CD8-positive, alpha-beta T cell (primary cell): ENCODE measurements at regions of chr17 and their contacts with region 1.

Region 1: GRCh38 chr17:40355123-40355803 is 9.3 kb downstream of the GJD3 start:
- DNase-seq: peak; percentile 67 to 90 (median 80)
- ATAC-seq: peak; percentile 78
- H3K4me3 ChIP-seq: no peak overlapping the region
- H3K4me3 Mint-ChIP-seq: no peak overlapping the region
- H3K27ac ChIP-seq: no peak overlapping the region
- H3K27ac Mint-ChIP-seq: no peak overlapping the region
- H3K4me1 ChIP-seq: no peaks in the 10 kb centered on the region
- H3K4me1 Mint-ChIP-seq: peaks cover 13% of the 10 kb centered on the region
- H3K27me3 ChIP-seq: no peaks in the 10 kb centered on the region
- H3K27me3 Mint-ChIP-seq: no peaks in the 10 kb centered on the region
- CTCF ChIP-seq: peak; percentile 93

Region 2: DNA sequence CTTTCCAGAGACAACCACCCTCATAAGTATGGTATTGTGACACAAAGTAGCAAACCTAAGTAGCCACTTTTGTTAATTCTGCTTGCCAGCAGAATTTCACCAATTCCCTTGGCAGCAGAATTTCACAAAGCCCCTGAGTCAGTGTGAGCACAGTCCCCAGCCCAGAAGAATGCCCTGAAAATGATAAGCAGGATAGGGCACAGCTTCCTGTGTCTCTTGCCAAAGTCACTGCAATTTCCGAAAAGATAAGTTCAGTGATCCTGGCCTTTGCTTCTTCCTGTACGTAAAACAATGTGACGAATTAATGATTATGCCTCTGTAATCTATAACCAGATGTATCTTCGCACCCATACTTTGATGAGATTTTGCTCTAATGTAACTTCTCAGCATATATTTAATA is 152.1 kb before region 1 on chr17:
- CTCF ChIA-PET with region 1: interaction called, 5 read pairs
- POLR2A ChIA-PET with region 1: no interaction called
- intact Hi-C with region 1: loop called (anchors 1 to 2 kb)
- DNase-seq: no peak
- ATAC-seq: no peak
- H3K4me3 ChIP-seq: no peak overlapping the region
- H3K4me3 Mint-ChIP-seq: no peak overlapping the region
- H3K27ac ChIP-seq: no peak overlapping the region
- H3K27ac Mint-ChIP-seq: no peak overlapping the region
- H3K4me1 ChIP-seq: no peaks in the 10 kb centered on the region
- H3K4me1 Mint-ChIP-seq: peaks cover 8% of the 10 kb centered on the region
- H3K27me3 ChIP-seq: peaks cover 0 to 4% of the 10 kb centered on the region in 2 experiments
- H3K27me3 Mint-ChIP-seq: peaks cover 6% of the 10 kb centered on the region
- CTCF ChIP-seq: no peak

Region 3: DNA sequence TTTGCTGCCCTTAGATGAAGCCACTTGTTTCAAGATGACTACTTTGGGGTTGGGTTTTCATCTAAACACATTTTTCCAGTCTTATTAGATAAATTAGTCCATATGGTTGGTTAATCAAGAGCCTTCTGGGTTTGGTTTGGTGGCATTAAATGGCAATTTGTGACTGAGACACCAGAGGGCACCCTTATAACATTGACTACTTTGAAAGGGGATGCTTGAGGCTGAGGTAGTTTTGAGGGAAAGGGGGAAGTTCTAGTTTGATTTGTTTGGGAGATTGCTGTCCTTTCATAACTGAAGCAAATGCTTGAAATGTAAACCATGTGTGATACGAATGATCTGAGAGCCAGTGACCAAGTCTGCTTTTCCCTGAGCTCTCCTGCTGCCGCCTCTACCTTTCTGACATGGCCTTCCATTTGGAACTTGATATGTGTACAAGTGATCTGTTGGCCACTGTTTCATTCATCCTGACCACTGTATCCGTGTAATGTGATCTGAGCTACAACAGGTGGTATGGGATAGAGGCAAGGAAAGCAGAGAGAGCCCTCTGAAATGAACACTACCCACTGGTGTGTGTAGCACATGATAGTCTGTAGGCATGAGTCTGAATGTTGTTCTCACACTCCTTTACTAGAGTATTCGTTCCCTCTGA is 52.1 kb before region 1 on chr17:
- CTCF ChIA-PET with region 1: interaction called, 1,103 read pairs
- POLR2A ChIA-PET with region 1: interaction called, 10 read pairs
- intact Hi-C with region 1: loop called (anchors 1 kb)
- DNase-seq: peak in 5 of 9 experiments; percentile 41 to 83 (median 66)
- ATAC-seq: peak; percentile 69
- H3K4me3 ChIP-seq: no peak overlapping the region
- H3K4me3 Mint-ChIP-seq: no peak overlapping the region
- H3K27ac ChIP-seq: no peak overlapping the region
- H3K27ac Mint-ChIP-seq: no peak overlapping the region
- H3K4me1 ChIP-seq: peaks cover 35% of the 10 kb centered on the region
- H3K4me1 Mint-ChIP-seq: peaks cover 12% of the 10 kb centered on the region
- H3K27me3 ChIP-seq: no peaks in the 10 kb centered on the region
- H3K27me3 Mint-ChIP-seq: no peaks in the 10 kb centered on the region
- CTCF ChIP-seq: peak; percentile 85

Region 4: GRCh38 chr17:40326014-40326831 is 29.0 kb before region 1 on chr17:
- CTCF ChIA-PET with region 1: interaction called, 1,103 read pairs
- POLR2A ChIA-PET with region 1: interaction called, 9 read pairs
- intact Hi-C with region 1: loop called in 1 of 2 experiments (anchors 5 kb)
- DNase-seq: peak in 7 of 9 experiments; percentile 39 to 92 (median 71)
- ATAC-seq: peak; percentile 9
- H3K4me3 ChIP-seq: peak overlapping the region; percentile 36 to 51
- H3K4me3 Mint-ChIP-seq: peak overlapping the region; percentile 80
- H3K27ac ChIP-seq: peak overlapping the region; percentile 80 to 97
- H3K27ac Mint-ChIP-seq: peak overlapping the region; percentile 99
- H3K4me1 ChIP-seq: peaks cover 92% of the 10 kb centered on the region
- H3K4me1 Mint-ChIP-seq: peaks cover 90% of the 10 kb centered on the region
- H3K27me3 ChIP-seq: no peaks in the 10 kb centered on the region
- H3K27me3 Mint-ChIP-seq: no peaks in the 10 kb centered on the region
- CTCF ChIP-seq: no peak

Region 5: DNA sequence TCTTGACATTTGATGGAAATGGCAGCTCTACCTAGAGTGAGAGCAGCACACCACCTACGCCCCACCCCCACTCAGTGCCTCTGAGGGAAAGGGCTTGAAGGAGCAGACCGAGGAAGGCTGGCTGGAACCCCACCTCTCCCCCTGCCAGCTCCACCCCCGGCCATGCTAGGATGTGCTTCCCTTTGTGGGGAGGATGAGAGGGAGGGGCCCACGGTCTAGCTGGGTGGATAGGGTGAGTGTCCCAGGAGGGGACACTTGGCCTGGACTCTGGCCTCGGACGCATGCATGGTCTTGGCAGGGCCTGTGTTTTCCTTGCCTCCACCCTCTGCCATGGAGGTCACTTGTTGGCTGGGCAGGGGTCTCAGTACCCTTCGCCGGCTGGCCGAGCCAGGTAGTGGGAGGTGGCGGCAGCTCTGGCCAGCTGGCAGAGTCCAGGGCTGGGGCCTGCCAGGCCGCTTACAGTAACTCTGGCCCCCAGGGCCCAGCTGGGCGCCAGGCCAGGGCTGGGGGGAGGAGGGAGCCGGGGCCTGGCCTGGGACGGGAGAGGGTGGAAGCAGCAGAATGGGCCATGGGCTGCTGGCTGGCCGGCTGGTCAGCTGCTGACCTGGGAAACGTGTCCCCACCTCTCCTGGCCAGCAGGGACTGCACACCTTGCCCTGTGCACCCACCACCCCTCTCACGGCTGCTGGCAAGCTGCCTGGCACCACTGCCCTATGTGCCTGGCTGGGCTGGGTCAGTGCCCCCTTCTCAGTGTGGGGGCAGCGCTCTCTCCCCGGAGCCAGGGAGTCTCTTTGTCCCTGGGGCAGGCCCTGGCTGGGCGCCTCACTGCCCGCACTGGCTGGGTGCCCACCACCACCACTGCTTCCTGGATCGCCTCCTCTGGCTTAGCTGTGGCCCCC is 23.3 kb before region 1 on chr17:
- CTCF ChIA-PET with region 1: interaction called, 25 read pairs
- POLR2A ChIA-PET with region 1: no interaction called
- intact Hi-C with region 1: no loop called
- DNase-seq: peak in 1 of 9 experiments; percentile 20
- ATAC-seq: no peak
- H3K4me3 ChIP-seq: no peak overlapping the region
- H3K4me3 Mint-ChIP-seq: peak overlapping the region; percentile 15
- H3K27ac ChIP-seq: no peak overlapping the region
- H3K27ac Mint-ChIP-seq: peak overlapping the region; percentile 67
- H3K4me1 ChIP-seq: peaks cover 82% of the 10 kb centered on the region
- H3K4me1 Mint-ChIP-seq: peaks cover 75% of the 10 kb centered on the region
- H3K27me3 ChIP-seq: no peaks in the 10 kb centered on the region
- H3K27me3 Mint-ChIP-seq: no peaks in the 10 kb centered on the region
- CTCF ChIP-seq: no peak

Region 6: DNA sequence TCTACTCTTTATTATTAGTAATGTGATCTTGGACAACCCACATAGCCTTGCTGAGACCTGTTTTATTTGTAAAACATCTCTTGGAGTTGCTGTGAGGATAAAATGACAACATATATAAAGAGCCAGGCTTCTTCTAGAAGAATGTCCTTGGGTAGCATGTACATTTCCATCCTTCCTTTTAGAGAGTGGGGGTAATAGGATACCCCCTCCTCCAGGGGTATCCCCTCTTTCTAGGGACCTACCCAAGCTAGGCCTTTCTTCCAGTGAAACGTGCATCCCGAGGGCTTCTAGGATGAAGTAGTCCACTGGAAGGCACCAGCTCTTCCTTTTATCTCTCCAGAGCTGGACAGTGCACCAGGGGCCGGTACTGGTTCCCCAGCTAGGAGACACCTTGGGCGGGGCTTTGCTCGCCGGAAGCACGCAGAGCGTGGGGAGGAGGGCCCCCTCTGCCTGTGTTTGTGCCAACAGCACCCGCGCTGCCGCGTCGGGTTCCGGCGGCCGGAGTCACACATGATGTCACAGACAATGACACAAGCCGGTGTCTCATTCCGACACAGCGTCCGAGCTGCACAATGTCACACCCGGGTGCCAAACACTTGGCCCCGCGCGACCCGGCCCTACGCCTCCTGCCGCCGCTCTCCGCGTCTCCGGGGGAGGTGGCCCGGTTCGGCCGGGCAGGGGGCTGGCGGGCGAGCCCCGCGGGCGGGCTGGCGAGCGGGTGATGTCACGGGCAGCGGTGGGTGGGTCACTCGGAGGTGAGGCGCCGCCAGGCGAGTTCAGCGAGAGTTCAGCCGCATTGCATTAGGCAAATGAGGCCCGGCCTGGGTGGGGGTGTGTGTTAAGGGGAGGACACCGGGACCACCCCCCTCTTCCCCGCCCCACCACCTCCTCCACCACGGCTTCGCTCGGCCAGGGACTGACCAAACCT is 14.1 kb before region 1 on chr17:
- CTCF ChIA-PET with region 1: interaction called, 34 read pairs
- POLR2A ChIA-PET with region 1: no interaction called
- intact Hi-C with region 1: no loop called
- DNase-seq: peak; percentile 76 to 96 (median 88)
- ATAC-seq: peak; percentile 75
- H3K4me3 ChIP-seq: peak overlapping the region; percentile 64 to 74
- H3K4me3 Mint-ChIP-seq: peak overlapping the region; percentile 83
- H3K27ac ChIP-seq: peak overlapping the region; percentile 87 to 91
- H3K27ac Mint-ChIP-seq: peak overlapping the region; percentile 96
- H3K4me1 ChIP-seq: peaks cover 78% of the 10 kb centered on the region
- H3K4me1 Mint-ChIP-seq: peaks cover 75% of the 10 kb centered on the region
- H3K27me3 ChIP-seq: no peaks in the 10 kb centered on the region
- H3K27me3 Mint-ChIP-seq: no peaks in the 10 kb centered on the region
- CTCF ChIP-seq: peak; percentile 24

Region 7: GRCh38 chr17:40474419-40475002 is 119.2 kb after region 1 on chr17:
- CTCF ChIA-PET with region 1: interaction called, 11 read pairs
- POLR2A ChIA-PET with region 1: no interaction called
- intact Hi-C with region 1: no loop called
- DNase-seq: no peak
- ATAC-seq: no peak
- H3K4me3 ChIP-seq: no peak overlapping the region
- H3K4me3 Mint-ChIP-seq: no peak overlapping the region
- H3K27ac ChIP-seq: no peak overlapping the region
- H3K27ac Mint-ChIP-seq: no peak overlapping the region
- H3K4me1 ChIP-seq: peaks cover 11% of the 10 kb centered on the region
- H3K4me1 Mint-ChIP-seq: peaks cover 10% of the 10 kb centered on the region
- H3K27me3 ChIP-seq: no peaks in the 10 kb centered on the region
- H3K27me3 Mint-ChIP-seq: no peaks in the 10 kb centered on the region
- CTCF ChIP-seq: no peak